ENCODE measurements at regions of chr4 and their contacts with region 1.

Region 1: DNA sequence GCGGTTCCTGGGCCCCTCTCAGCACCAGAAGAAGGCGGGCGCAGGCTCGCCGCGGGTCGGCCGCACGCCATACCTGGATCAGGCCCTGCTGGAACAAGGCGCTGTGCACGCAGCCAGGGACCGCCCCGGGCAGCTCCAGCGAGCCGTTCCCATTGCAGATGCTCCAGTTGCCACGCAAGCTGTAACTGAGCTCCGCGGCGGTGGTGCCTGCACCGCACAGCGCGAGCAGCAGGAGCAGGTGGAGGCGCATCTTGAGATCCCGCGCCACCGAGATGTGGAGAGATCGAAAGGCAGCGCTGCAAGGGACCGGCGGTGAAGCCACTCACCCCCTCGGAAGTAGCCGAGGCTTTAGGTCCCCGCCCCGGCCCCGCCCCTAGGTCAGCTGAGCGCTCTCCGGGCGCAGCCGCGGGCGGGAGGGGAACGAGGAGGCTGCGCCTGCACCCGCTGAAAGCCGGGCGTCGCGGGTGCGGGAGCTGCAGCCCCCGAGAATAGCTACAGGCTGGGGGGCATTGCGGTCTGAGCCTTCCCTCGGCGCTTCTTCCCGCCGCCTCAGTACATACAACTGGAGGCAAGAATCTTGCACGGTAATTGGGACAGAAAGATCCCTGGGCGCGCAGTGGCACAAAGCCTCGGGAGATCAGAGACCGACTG is at the start of gene MANBA:
- DNase-seq: peak; percentile 84
- H3K4me3 Mint-ChIP-seq: peak within 1 kb of the TSS; percentile 90
- H3K27ac Mint-ChIP-seq: peak within 1 kb of the TSS; percentile 37
- H3K4me1 Mint-ChIP-seq: peaks cover 17% of the 10 kb centered on the region
- H3K27me3 Mint-ChIP-seq: no peaks in the 10 kb centered on the region
- CTCF ChIP-seq: no peak
- total RNA-seq, gene MANBA: 11.2 and 13.2 TPM in 2 replicates

Region 2: GRCh38 chr4:102687373-102687981 is 73.3 kb before region 1 on chr4:
- CTCF ChIA-PET with region 1: no interaction called
- POLR2A ChIA-PET with region 1: interaction called, 5 read pairs
- intact Hi-C with region 1: loop called (anchors 2 kb)
- DNase-seq: peak; percentile 67
- H3K4me3 Mint-ChIP-seq: no peak overlapping the region
- H3K27ac Mint-ChIP-seq: no peak overlapping the region
- H3K4me1 Mint-ChIP-seq: no peaks in the 10 kb centered on the region
- H3K27me3 Mint-ChIP-seq: no peaks in the 10 kb centered on the region
- CTCF ChIP-seq: no peak

Region 3: DNA sequence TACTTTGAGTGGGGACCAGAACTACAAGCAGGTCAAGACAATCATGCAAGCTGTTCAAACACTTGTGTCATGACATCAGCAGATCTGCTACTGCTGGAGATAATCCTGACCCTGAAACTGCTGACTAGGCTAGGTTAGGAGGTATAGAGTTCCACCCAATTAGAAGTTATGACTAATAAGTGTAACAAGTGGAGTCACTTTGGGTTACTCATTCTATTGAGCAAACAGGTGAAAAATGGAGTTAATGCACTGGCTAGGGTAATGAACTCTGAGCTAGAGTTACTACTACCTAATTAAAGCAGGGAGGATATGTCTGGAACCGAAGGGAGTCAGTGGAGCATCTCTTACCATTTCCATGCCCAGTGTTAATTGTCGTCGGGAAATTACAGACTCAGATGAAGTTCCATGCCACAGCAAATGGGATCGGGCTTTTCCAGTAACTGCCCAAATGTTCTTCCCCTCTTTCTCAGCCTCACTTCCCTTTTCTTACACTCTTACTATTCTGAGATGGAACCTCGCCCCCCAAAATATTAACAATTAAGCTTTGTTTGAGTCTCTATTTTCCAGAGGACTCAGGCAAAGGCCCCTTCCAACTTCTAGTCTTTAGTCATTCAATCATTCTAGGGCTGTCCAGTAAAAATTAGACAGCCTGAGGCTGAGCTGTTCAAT is 19.8 kb after region 1 on chr4:
- CTCF ChIA-PET with region 1: no interaction called
- POLR2A ChIA-PET with region 1: interaction called, 20 read pairs
- intact Hi-C with region 1: no loop called
- DNase-seq: peak; percentile 73
- H3K4me3 Mint-ChIP-seq: no peak overlapping the region
- H3K27ac Mint-ChIP-seq: no peak overlapping the region
- H3K4me1 Mint-ChIP-seq: peaks cover 10% of the 10 kb centered on the region
- H3K27me3 Mint-ChIP-seq: no peaks in the 10 kb centered on the region
- CTCF ChIP-seq: no peak

Region 4: GRCh38 chr4:102789317-102789717 is 28.5 kb after region 1 on chr4:
- CTCF ChIA-PET with region 1: no interaction called
- POLR2A ChIA-PET with region 1: interaction called, 11 read pairs
- intact Hi-C with region 1: no loop called
- DNase-seq: peak; percentile 69
- H3K4me3 Mint-ChIP-seq: no peak overlapping the region
- H3K27ac Mint-ChIP-seq: peak overlapping the region; percentile 46
- H3K4me1 Mint-ChIP-seq: no peaks in the 10 kb centered on the region
- H3K27me3 Mint-ChIP-seq: no peaks in the 10 kb centered on the region
- CTCF ChIP-seq: no peak

Region 5: GRCh38 chr4:102815981-102816380 is 55.2 kb after region 1 on chr4:
- CTCF ChIA-PET with region 1: interaction called, 3 read pairs
- POLR2A ChIA-PET with region 1: interaction called, 14 read pairs
- intact Hi-C with region 1: no loop called
- DNase-seq: peak; percentile 51
- H3K4me3 Mint-ChIP-seq: no peak overlapping the region
- H3K27ac Mint-ChIP-seq: peak overlapping the region; percentile 29
- H3K4me1 Mint-ChIP-seq: peaks cover 57% of the 10 kb centered on the region
- H3K27me3 Mint-ChIP-seq: no peaks in the 10 kb centered on the region
- CTCF ChIP-seq: no peak